AG04450 (cell line): ENCODE measurements at regions of chr4 and their contacts with region 1.

Region 1: GRCh38 chr4:52545099-52546069 is 113.7 kb downstream of the USP46 start:
- DNase-seq: peak; percentile 33
- H3K4me3 ChIP-seq: no peak overlapping the region
- H3K27ac ChIP-seq: no peak overlapping the region
- H3K27me3 ChIP-seq: no peaks in the 10 kb centered on the region
- CTCF ChIP-seq: peak; percentile 99

Region 2: GRCh38 chr4:52588097-52588782 is 42.9 kb after region 1 on chr4:
- CTCF ChIA-PET with region 1: interaction called, 18 read pairs
- POLR2A ChIA-PET with region 1: no interaction called
- DNase-seq: no peak
- H3K4me3 ChIP-seq: no peak overlapping the region
- H3K27ac ChIP-seq: peak overlapping the region; percentile 55
- H3K27me3 ChIP-seq: no peaks in the 10 kb centered on the region
- CTCF ChIP-seq: peak; percentile 50

Region 3: GRCh38 chr4:52684896-52685295 is 139.5 kb after region 1 on chr4:
- CTCF ChIA-PET with region 1: interaction called, 12 read pairs
- POLR2A ChIA-PET with region 1: no interaction called
- DNase-seq: no peak
- H3K4me3 ChIP-seq: no peak overlapping the region
- H3K27ac ChIP-seq: no peak overlapping the region
- H3K27me3 ChIP-seq: peaks cover 11% of the 10 kb centered on the region
- CTCF ChIP-seq: no peak

Region 4: DNA sequence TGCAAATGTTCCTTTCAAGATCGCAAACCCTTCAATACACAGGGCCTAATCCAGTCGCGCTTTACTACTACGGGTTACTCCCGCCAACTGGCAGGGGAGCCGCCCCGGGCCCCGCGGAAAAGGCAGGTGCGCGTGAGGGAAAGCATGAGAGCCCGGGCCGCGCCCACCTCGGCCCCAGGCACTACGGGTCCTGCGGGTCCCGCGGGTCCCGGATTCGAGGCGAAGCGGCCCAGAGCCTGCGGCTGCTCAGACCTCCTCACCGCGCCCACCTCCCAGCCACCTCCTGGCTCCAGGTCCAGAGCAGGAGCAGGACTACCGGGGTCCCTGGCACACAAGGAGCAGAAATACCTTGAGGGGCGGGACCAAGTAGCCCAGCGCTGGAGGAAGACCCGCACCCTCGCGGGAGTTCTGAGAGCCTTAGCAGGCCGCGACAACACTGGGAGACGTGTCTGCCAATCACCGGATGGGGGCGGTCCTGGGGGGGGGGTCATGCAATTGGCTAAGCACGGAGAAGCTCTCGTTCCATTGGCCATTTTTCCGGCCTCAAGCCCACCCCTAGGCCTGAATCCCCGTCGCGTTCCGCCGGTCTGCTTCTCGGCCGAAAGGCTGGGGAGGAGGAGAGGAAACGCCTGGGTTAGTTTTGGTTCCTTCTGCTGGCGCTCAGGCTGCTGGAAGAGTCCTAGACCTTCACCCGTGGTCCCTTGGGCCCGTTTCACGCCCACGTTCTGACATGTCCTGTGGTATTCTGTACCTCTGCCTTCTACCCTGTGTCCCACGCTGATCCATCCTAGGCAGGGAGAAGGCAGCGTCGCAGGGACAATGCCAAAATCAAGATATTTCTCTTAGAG is 176.8 kb after region 1 on chr4:
- CTCF ChIA-PET with region 1: interaction called, 13 read pairs
- POLR2A ChIA-PET with region 1: interaction called, 3 read pairs
- DNase-seq: peak; percentile 92
- H3K4me3 ChIP-seq: peak overlapping the region; percentile 82
- H3K27ac ChIP-seq: peak overlapping the region; percentile 74
- H3K27me3 ChIP-seq: no peaks in the 10 kb centered on the region
- CTCF ChIP-seq: no peak

Region 5: DNA sequence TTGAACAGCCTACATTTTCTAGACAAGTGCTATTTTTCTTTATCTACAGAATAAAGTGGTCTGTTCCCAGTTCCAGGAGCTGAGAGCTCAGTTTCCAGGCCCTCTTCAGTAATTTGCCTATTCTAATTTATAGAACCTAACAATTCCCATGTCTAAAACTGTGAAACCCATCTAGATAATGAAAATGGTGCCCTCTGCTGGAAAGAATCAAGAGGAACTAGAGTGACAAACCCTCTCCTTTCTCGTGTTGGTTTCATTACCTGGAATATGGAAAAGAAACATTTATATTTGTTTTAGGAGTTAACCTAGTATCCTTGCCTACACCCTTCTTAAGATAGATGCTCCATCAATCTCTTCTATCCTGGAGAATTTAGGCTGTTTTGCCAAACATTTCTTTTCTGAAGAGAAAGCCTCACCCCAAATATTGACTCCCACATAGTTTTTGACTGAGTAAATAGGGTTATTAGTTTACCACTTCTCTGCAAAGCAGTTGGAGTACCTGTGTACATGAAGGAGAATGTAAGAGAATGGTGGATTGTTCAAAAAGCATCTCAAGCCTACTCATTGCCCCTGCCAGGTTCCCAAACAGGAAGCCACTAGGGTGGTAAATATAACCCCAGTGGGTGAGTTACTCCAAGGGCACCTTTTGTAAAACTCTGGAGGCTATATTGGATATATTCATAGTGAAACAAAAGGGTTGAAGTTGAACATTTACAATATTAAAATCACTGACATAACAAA is 438.3 kb after region 1 on chr4:
- CTCF ChIA-PET with region 1: interaction called, 159 read pairs
- POLR2A ChIA-PET with region 1: no interaction called
- DNase-seq: peak; percentile 21
- H3K4me3 ChIP-seq: no peak overlapping the region
- H3K27ac ChIP-seq: no peak overlapping the region
- H3K27me3 ChIP-seq: no peaks in the 10 kb centered on the region
- CTCF ChIP-seq: peak; percentile 69